ENCODE measurements at regions of chr13 and their contacts with region 1.

Region 1: GRCh38 chr13:77516342-77516789 is 19.1 kb upstream of the SCEL start:
- DNase-seq: no peak
- ATAC-seq: peak; percentile 57
- H3K4me3 ChIP-seq: no peak overlapping the region
- H3K27ac ChIP-seq: no peak overlapping the region
- H3K4me1 ChIP-seq: peaks cover 14% of the 10 kb centered on the region; the same call in 1 of the 2 replicates
- H3K27me3 ChIP-seq: no peaks in the 10 kb centered on the region
- CTCF ChIP-seq: no peak
- EP300 ChIP-seq: no peak
- POLR2A ChIP-seq: no peak
- RAD21 ChIP-seq: no peak

Region 2: GRCh38 chr13:77460195-77460594 is 56.2 kb before region 1 on chr13:
- CTCF ChIA-PET with region 1: no interaction called
- POLR2A ChIA-PET with region 1: no interaction called
- RAD21 ChIA-PET with region 1: no interaction called
- SMC1A ChIA-PET with region 1: no interaction called
- in situ Hi-C with region 1: no loop called
- intact Hi-C with region 1: no loop called
- DNase-seq: peak; percentile 26
- ATAC-seq: peak; percentile 99
- H3K4me3 ChIP-seq: no peak overlapping the region
- H3K27ac ChIP-seq: no peak overlapping the region
- H3K4me1 ChIP-seq: peaks cover 3% of the 10 kb centered on the region; the same call in 1 of the 2 replicates
- H3K27me3 ChIP-seq: no peaks in the 10 kb centered on the region
- CTCF ChIP-seq: no peak
- EP300 ChIP-seq: no peak
- POLR2A ChIP-seq: no peak
- RAD21 ChIP-seq: no peak

Region 3: GRCh38 chr13:77528834-77529505 is 12.6 kb after region 1 on chr13:
- CTCF ChIA-PET with region 1: interaction called, 5 read pairs
- POLR2A ChIA-PET with region 1: interaction called, 3 read pairs
- RAD21 ChIA-PET with region 1: interaction called, 7 read pairs
- SMC1A ChIA-PET with region 1: interaction called, 14 read pairs
- in situ Hi-C with region 1: no loop called
- intact Hi-C with region 1: no loop called
- DNase-seq: no peak
- ATAC-seq: peak; percentile 93
- H3K4me3 ChIP-seq: no peak overlapping the region
- H3K27ac ChIP-seq: no peak overlapping the region
- H3K4me1 ChIP-seq: 0 out of 2 replicates have a peak, but pooled peaks cover 10% of the 10 kb centered on the region
- H3K27me3 ChIP-seq: peaks cover 0 to 3% of the 10 kb centered on the region in 2 experiments; a peak in 1 of 4 replicates
- CTCF ChIP-seq: no peak
- EP300 ChIP-seq: peak; percentile 26 to 64; a peak in 2 of 4 replicates
- POLR2A ChIP-seq: no peak
- RAD21 ChIP-seq: no peak

Region 4: DNA sequence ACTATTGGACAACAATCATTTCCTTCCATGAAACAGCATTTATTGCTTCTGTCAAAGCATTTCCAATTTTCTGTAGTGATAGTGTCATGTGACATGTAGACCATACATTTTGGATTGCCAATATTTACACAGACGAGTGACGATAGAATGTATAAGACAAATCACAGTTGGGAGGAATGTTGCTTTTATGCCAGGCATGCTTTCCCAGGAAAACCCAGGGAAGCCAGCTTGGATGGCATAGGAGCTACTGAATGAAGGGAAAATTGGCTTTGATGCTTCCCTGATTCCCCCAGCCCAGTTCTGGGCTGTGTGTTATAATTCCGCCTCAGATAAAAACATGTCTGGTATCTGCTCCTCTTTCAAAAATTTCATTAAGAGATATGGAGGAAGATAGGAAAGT is 41.6 kb after region 1 on chr13:
- CTCF ChIA-PET with region 1: interaction called, 4 read pairs
- POLR2A ChIA-PET with region 1: no interaction called
- RAD21 ChIA-PET with region 1: no interaction called
- SMC1A ChIA-PET with region 1: interaction called, 6 read pairs
- in situ Hi-C with region 1: no loop called
- intact Hi-C with region 1: loop called (anchors 1 kb)
- DNase-seq: no peak
- ATAC-seq: no peak
- H3K4me3 ChIP-seq: no peak overlapping the region
- H3K27ac ChIP-seq: no peak overlapping the region
- H3K4me1 ChIP-seq: peaks cover 15% of the 10 kb centered on the region
- H3K27me3 ChIP-seq: no peaks in the 10 kb centered on the region
- CTCF ChIP-seq: no peak
- EP300 ChIP-seq: no peak
- POLR2A ChIP-seq: no peak
- RAD21 ChIP-seq: no peak

Region 5: GRCh38 chr13:77599351-77599750 is 83.0 kb after region 1 on chr13:
- CTCF ChIA-PET with region 1: no interaction called
- POLR2A ChIA-PET with region 1: no interaction called
- RAD21 ChIA-PET with region 1: no interaction called
- SMC1A ChIA-PET with region 1: no interaction called
- in situ Hi-C with region 1: no loop called
- intact Hi-C with region 1: no loop called
- DNase-seq: no peak
- ATAC-seq: no peak
- H3K4me3 ChIP-seq: no peak overlapping the region
- H3K27ac ChIP-seq: no peak overlapping the region
- H3K4me1 ChIP-seq: no peaks in the 10 kb centered on the region
- H3K27me3 ChIP-seq: peaks cover 0 to 7% of the 10 kb centered on the region in 2 experiments; a peak in 2 of 4 replicates
- CTCF ChIP-seq: no peak
- EP300 ChIP-seq: no peak
- POLR2A ChIP-seq: no peak
- RAD21 ChIP-seq: no peak

Measured in GM12878 (cell line).